ENCODE measurements at regions of chr16 and their contacts with region 1.

Region 1: DNA sequence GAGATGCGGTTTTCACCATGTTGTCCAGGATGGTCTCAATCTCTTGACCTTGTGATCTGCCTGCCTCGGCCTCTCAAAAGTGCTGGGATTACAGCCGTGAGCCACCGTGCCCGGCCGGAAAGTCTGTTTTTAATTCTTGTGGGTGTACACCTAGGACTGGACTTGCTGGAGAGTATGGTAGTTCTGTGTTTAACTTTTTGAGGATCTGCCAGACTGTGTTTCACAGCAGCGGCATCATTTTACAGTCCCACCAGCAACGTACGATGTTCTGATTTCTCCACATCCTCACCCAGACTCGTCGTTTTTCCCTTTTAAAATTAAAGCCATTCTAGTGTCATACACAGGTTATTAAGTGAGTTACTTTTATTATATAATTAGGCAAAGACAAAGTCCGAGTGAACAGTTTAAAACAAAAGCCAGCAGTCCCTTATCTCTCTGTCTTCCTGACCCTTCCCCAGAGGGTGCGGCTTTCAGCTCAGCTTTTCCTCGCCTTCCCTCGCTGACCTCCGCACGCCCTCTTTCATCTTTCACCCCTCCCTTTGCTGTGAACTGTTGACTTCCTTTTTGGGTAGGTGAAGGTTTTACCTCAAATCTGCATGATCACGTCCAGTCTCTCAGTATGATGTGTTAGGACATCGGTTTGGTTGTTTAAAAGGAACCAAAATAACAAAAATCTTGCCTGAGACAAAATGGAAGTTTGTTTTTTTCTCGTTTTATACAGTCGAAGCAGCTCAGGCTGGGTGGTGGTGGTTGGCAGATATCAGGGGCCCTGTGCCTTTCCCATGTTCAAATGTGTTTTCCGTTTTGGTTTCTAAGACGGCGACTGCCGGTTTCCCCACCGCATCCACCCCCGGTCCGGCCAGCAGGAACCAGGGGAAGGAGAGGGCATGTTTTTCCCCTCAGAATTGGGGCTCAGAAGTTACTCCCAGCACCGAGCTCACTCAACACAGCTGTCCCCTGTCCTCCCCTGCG is 18.0 kb downstream of the FAM234A start:
- DNase-seq: peak; percentile 36 to 82 (median 73)
- H3K4me3 ChIP-seq: peak overlapping the region in 6 of 7 experiments; percentile 23 to 77 (median 60)
- H3K27ac ChIP-seq: peak overlapping the region; percentile 79 to 80
- H3K4me1 ChIP-seq: peaks cover 0 to 26% (median 19%) of the 10 kb centered on the region in 4 experiments
- H3K27me3 ChIP-seq: no peaks in the 10 kb centered on the region

Region 2: DNA sequence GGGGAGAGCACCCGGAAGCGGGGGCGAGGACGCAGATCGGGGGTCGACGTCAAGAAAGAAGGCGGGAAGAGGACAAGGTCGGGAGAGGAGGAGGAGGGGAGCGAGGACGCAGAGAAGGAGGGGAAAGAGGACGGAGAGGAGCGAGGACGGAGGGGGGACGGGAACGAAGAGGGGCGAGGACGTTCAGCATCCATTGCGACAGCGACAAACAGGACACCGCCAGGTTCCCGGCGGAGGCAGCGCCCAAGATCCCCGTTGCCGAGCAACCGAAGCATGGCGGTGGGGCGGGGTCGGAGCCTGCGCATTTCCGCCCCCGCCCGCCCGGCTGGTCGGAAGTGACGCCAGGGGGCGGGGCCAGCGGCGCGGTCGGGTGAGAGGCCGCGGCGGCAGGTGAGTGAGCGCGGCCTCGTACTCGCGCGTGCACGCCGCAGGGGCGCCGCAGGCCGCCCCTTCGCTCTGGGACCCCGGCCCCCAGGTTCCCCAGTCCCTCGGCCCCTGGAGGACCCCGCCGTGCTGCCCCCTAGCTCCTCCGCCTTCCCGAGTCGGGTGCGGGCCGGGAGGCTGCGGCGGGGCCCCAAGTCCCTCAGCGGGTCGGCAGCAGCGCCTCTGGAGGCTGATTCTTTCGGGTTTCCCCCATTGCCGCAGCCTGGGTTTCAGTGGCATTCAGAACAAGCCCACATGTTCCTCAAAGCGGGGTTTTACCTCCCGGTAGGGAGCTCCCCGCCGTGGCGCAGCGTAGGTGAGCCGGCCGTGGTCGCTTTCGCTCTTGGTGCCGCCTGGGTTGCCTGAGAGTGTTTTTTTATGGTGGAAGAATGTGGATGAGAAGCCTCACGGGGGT is 18.0 kb before region 1 on chr16 and contains the start of gene FAM234A:
- CTCF ChIA-PET with region 1: interaction called, 13 read pairs
- POLR2A ChIA-PET with region 1: interaction called, 3 read pairs
- DNase-seq: peak; percentile 94 to 97 (median 96)
- H3K4me3 ChIP-seq: peak within 1 kb of the TSS; percentile 68 to 99 (median 90)
- H3K27ac ChIP-seq: peak within 1 kb of the TSS; percentile 93 to 94
- H3K4me1 ChIP-seq: peaks cover 0 to 14% (median 8%) of the 10 kb centered on the region in 4 experiments
- H3K27me3 ChIP-seq: no peaks in the 10 kb centered on the region